ENCODE measurements at regions of chr17 and their contacts with region 1.

Region 1: DNA sequence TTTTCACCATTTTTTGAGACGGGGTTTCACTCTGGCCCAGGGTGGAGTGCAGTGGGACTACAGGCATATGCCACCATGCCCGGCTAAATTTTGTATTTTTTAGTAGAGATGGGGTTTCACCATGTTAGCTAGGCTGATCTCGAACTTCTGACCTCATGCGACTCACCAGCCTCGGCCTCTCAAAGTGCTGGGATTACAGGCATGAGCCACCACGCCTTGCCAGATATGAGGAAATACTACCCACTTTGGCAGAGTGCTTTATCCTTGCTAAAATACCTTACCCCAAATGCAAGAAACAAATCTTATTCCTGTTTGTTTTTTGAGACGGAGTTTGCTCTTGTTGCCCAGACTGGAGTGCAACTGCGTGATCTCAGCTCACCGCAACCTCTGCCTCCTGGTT is 62.9 kb upstream of the MGAT5B start:
- DNase-seq: no peak
- H3K4me3 ChIP-seq: no peak overlapping the region
- H3K27ac ChIP-seq: no peak overlapping the region
- H3K4me1 ChIP-seq: no peaks in the 10 kb centered on the region
- H3K27me3 ChIP-seq: no peaks in the 10 kb centered on the region
- CTCF ChIP-seq: no peak
- EP300 ChIP-seq: no peak
- POLR2A ChIP-seq: no peak
- RAD21 ChIP-seq: no peak

Region 2: DNA sequence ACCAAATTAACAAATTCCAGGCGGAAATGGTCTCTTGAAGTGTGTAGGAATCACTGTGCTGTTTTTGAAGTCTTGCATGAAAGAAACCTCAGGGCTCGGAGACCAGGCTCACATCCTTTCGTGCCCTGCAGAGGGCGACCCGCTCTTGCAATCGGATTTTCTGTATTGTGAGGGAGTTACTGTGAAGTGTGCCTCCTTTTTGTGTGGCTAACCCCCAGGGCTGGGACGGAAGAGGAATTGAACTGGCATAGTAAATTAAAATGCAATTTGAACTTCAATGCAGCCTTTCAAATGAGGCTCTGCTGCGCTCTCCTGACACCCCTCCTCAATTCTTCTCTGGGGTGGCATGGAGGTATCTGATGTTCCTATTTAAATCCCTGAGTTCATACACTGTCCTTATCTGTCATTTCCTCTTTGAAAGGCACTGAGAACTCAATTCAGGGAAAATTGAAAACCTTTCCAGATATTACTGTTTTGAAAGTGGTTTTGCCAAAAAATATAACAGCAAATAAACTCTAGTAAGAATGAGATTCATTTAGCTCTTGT is 11.3 kb after region 1 on chr17:
- CTCF ChIA-PET with region 1: interaction called, 13 read pairs
- POLR2A ChIA-PET with region 1: no interaction called
- DNase-seq: peak; percentile 53 to 69
- H3K4me3 ChIP-seq: no peak overlapping the region
- H3K27ac ChIP-seq: no peak overlapping the region
- H3K4me1 ChIP-seq: peaks cover 0 to 3% (median 0%) of the 10 kb centered on the region in 4 experiments; a peak in 3 of 7 replicates
- H3K27me3 ChIP-seq: no peaks in the 10 kb centered on the region
- CTCF ChIP-seq: peak; percentile 81 to 90 (median 85)
- EP300 ChIP-seq: no peak
- POLR2A ChIP-seq: no peak
- RAD21 ChIP-seq: peak; percentile 82 to 88

Region 3: GRCh38 chr17:76881966-76882365 is 76.6 kb after region 1 on chr17:
- CTCF ChIA-PET with region 1: no interaction called
- POLR2A ChIA-PET with region 1: no interaction called
- DNase-seq: no peak
- H3K4me3 ChIP-seq: no peak overlapping the region
- H3K27ac ChIP-seq: no peak overlapping the region
- H3K4me1 ChIP-seq: peaks cover 0 to 16% (median 9%) of the 10 kb centered on the region in 4 experiments; a peak in 6 of 7 replicates
- H3K27me3 ChIP-seq: no peaks in the 10 kb centered on the region
- CTCF ChIP-seq: no peak
- EP300 ChIP-seq: no peak
- POLR2A ChIP-seq: no peak
- RAD21 ChIP-seq: no peak

Region 4: DNA sequence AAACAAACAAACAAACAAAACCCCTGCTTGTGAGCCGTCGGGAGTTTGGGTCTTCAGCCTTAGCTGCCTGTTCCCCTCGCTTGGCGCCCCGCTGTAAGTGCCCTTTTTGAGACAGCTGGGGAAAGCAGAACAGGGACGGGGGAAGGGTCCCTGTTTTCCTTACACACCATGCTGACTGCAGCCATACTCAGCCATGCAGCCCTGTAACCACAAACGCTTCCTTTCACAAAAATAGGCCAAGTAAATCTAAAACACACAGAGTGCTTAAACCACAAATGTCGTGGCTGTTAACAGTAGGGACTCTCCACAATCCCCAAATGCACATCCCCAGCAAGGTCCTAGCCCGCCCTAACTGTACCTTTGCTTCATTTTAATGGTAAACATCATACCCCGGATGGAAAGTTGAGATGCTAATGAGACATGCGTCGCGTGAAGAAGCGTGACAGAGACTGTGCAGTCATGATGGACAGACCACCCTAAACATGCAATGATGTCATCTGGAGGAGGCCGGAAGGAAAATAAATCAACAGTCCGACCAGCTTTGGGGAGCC is 192.7 kb after region 1 on chr17:
- CTCF ChIA-PET with region 1: no interaction called
- POLR2A ChIA-PET with region 1: no interaction called
- DNase-seq: no peak
- H3K4me3 ChIP-seq: no peak overlapping the region
- H3K27ac ChIP-seq: no peak overlapping the region
- H3K4me1 ChIP-seq: peaks cover 6 to 31% (median 17%) of the 10 kb centered on the region in 4 experiments
- H3K27me3 ChIP-seq: 0 out of 7 replicates have a peak, but pooled peaks cover 0 to 2% (median 0%) of the 10 kb centered on the region in 4 experiments
- CTCF ChIP-seq: no peak
- EP300 ChIP-seq: no peak
- POLR2A ChIP-seq: no peak
- RAD21 ChIP-seq: no peak